ENCODE measurements at regions of chr7 and their contacts with region 1.

Region 1: GRCh38 chr7:13262929-13263530 is 575.6 kb downstream of the ARL4A start:
- DNase-seq: no peak
- H3K4me3 ChIP-seq: no peak overlapping the region
- H3K27ac ChIP-seq: no peak overlapping the region
- H3K4me1 ChIP-seq: no peaks in the 10 kb centered on the region
- H3K27me3 ChIP-seq: no peaks in the 10 kb centered on the region
- CTCF ChIP-seq: peak; percentile 34 to 61 (median 46)
- EP300 ChIP-seq: no peak
- POLR2A ChIP-seq: no peak

Region 2: DNA sequence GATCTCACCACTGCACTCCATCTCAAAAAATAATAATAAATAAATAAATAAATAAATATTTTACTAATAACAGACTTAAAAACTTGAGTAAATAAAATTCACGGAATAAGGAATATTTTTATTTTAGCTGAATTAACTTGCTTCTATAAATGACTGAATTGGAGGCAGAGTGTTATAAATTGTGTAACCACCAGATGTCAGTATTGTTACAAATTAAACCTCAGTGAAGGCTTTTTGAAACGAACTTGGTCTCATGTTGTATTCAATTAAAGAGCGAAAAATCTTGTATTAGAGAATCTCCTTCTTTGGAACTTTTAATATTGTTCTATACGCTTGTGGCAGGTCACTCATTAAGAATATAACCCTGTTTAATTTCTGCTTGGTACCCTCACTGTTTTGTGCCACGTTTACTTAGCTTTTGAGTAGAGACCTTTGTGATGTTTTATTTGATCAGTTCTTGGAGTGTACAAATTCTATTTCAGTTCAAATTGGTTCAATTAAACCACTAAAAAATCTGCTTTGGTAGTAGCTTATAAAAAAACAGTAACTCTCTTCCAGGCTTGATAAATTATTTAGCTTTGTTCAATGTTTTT is 738.1 kb before region 1 on chr7:
- intact Hi-C with region 1: loop called (anchors 2 kb)
- DNase-seq: no peak
- H3K4me3 ChIP-seq: no peak overlapping the region
- H3K27ac ChIP-seq: no peak overlapping the region
- H3K4me1 ChIP-seq: no peaks in the 10 kb centered on the region
- H3K27me3 ChIP-seq: no peaks in the 10 kb centered on the region
- CTCF ChIP-seq: peak; percentile 27 to 72 (median 39)
- EP300 ChIP-seq: no peak
- POLR2A ChIP-seq: no peak

Region 3: GRCh38 chr7:12638851-12639467 is 624.1 kb before region 1 on chr7:
- intact Hi-C with region 1: loop called (anchors 2 kb)
- DNase-seq: no peak
- H3K4me3 ChIP-seq: no peak overlapping the region
- H3K27ac ChIP-seq: no peak overlapping the region
- H3K4me1 ChIP-seq: peaks cover 0 to 29% (median 8%) of the 10 kb centered on the region in 4 donors
- H3K27me3 ChIP-seq: no peaks in the 10 kb centered on the region
- CTCF ChIP-seq: peak in 3 of 4 experiments; percentile 30 to 62 (median 37)
- EP300 ChIP-seq: no peak
- POLR2A ChIP-seq: no peak

Region 4: GRCh38 chr7:12686894-12687717 is 575.9 kb before region 1 on chr7 and contains the start of gene ARL4A:
- intact Hi-C with region 1: loop called (anchors 2 kb)
- DNase-seq: peak; percentile 99
- H3K4me3 ChIP-seq: peak within 1 kb of the TSS; percentile 74 to 99 (median 91)
- H3K27ac ChIP-seq: peak within 1 kb of the TSS; percentile 88 to 97 (median 94)
- H3K4me1 ChIP-seq: peaks cover 0 to 24% (median 10%) of the 10 kb centered on the region in 4 donors
- H3K27me3 ChIP-seq: no peaks in the 10 kb centered on the region
- CTCF ChIP-seq: peak in 1 of 4 experiments; percentile 14
- EP300 ChIP-seq: no peak
- POLR2A ChIP-seq: peak; percentile 81 to 86
- total RNA-seq, gene ARL4A: 33.2 to 42.8 (median 35.7) TPM

Region 5: GRCh38 chr7:13359656-13360055 is 96.6 kb after region 1 on chr7:
- intact Hi-C with region 1: no loop called
- DNase-seq: no peak
- H3K4me3 ChIP-seq: no peak overlapping the region
- H3K27ac ChIP-seq: no peak overlapping the region
- H3K4me1 ChIP-seq: no peaks in the 10 kb centered on the region
- H3K27me3 ChIP-seq: no peaks in the 10 kb centered on the region
- CTCF ChIP-seq: no peak
- EP300 ChIP-seq: no peak
- POLR2A ChIP-seq: no peak